ENCODE measurements at regions of chr4 and their contacts with region 1.

Region 1: GRCh38 chr4:153785910-153786721 is 2.8 kb downstream of the SFRP2 start:
- DNase-seq: no peak
- ATAC-seq: peak; percentile 46

Region 2: DNA sequence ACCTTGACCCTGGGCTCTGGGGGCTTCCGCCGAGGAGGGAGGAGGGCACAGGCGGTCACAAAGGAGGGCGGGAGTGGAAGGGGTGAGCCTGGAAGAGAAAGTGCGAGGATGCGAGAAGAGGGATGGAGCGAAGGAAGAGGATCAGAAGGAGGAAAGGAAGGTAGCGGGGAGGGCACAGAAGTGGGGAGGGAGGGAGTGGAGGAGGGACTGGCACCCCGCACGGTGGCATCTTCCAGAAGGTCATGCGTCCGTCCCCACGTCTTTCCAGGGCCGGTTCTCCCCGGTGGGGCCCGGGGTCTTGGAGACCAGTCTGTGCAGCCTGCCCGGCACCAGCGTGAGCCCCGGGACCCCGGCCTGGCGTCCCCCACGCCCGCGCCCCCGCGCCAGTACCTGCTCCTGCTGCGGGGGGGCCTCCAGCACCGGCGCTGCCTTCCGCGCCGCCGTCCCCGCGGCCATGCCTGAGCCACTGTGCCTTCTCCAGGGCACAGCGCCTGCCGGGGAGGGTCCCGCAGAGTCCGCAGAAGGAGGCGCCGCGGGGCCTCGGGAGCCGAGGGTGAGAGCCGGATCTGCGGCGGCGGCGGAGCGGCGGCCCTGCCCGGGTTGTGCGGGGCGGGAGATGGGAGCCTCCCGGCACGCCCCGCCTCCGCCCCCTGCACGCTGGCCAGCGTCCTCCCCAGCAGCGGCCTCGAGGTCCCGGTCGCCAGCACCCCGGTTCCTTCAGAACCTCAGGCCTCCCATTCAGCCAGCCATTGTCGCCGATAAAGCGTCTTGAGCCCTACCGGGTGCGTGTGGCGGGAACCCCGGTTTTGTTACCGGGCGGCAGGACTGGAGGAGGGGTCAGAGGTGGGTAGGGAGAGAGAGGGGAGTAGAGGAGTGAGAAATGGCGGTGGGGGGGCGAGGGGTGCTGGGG is 26.5 kb before region 1 on chr4 and contains the start of gene RNF175:
- intact Hi-C with region 1: no loop called
- DNase-seq: peak; percentile 40
- ATAC-seq: peak; percentile 45
- total RNA-seq, gene RNF175: 0.38 TPM

Region 3: DNA sequence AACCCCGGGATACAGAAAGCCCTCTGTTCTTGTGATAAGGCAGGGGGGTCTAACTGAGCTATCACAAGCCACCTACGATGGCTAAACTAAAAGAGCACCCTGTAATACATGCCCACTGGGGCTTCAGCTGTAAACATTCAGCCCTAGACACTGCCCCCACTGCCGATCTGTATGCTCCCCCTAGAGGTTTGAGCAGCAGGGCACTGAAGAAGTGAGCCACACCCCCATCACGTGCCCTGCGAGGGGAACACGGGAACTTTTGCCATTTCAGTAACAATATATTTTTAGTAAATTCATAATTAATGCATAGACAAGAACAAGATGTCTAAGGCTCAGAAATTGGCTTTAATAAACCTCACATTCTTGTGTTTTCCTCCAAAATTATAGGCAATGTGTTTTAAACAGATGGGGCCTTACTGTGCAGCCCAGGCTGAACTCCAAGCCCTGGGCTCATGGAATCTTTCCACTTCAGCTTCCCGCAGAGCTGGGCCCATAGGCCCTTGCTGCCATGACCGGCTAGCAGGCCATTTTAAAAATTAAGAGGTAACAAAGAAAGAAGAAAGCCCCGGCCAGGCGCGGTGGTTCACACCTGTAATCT is 238.1 kb after region 1 on chr4:
- intact Hi-C with region 1: loop called (anchors 10 kb)
- DNase-seq: no peak
- ATAC-seq: no peak

Region 4: GRCh38 chr4:154314248-154314647 is 528.1 kb after region 1 on chr4:
- intact Hi-C with region 1: loop called (anchors 5 kb)
- DNase-seq: no peak
- ATAC-seq: no peak